MCF 10A (cell line): ENCODE measurements at regions of chr1 and their contacts with region 1.

Region 1: GRCh38 chr1:112706908-112707663 is at the start of gene RHOC:
- DNase-seq: peak; percentile 91
- H3K4me3 Mint-ChIP-seq: peak within 1 kb of the TSS; percentile 78
- H3K27ac Mint-ChIP-seq: peak within 1 kb of the TSS; percentile 91
- H3K4me1 Mint-ChIP-seq: peaks cover 37% of the 10 kb centered on the region
- H3K27me3 Mint-ChIP-seq: no peaks in the 10 kb centered on the region
- CTCF ChIP-seq: peak; percentile 86
- total RNA-seq, gene RHOC: 253 and 294 TPM in 2 replicates

Region 2: DNA sequence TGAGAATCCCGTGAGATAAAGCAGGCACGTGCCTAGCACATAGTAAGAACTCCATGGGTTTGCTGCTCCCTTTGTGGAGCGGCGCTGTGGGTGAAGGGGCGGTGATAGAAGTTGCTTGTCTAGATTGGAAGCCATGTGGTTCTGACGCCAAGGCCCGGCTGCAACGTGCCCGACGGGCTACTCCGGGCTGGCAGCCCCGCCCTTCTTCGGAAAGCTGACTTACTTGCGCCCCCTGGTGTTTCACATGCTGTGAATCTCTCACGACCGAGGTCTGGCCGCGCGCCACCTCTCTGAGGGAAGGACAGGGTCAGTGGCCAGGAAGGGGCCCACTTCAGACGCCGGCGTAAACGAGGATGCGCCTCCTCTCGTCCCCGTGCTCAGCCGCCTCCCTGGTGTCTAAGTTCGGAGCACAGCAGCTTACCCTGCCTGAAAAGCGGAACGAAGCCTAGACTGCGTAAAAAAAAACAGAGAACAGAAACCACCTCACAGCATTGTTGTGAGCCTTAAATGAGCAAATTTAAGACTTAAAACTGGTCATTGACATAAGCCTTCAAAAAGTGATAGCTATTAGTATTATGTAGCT is 240.9 kb before region 1 on chr1:
- CTCF ChIA-PET with region 1: interaction called, 4 read pairs
- POLR2A ChIA-PET with region 1: no interaction called
- intact Hi-C with region 1: loop called (anchors 1 kb)
- DNase-seq: peak; percentile 89
- H3K4me3 Mint-ChIP-seq: peak overlapping the region; percentile 67
- H3K27ac Mint-ChIP-seq: peak overlapping the region; percentile 87
- H3K4me1 Mint-ChIP-seq: peaks cover 15% of the 10 kb centered on the region
- H3K27me3 Mint-ChIP-seq: no peaks in the 10 kb centered on the region
- CTCF ChIP-seq: peak; percentile 76

Region 3: DNA sequence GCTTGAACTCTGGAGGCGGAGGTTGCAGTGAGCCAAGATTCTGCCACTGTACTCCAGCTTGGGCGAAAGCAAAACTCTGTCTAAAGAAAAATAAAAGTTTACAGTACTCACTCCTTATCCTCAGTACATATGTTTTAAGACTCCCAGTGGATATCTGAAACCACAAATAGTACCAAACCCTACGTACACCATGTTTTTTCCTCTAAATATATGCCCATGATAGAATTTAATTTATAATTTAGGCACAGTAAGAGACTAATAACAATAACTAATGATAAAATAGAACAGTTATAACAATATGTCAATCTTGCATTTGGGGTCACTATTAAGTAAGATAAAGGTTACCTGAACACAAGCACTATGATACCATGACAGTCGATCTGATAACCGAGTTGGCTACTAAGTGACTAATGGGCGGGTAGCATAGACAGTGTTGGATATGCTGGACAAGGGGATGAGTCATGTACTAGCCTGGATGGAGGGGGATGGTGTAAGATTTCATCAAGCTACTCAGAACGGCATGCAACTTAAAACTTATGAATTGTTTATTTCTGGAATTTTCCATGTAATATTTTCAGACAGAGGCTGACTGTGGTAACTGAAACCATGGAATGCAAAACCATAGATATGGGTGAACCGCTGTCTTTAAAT is 131.8 kb before region 1 on chr1:
- CTCF ChIA-PET with region 1: no interaction called
- POLR2A ChIA-PET with region 1: no interaction called
- intact Hi-C with region 1: loop called (anchors 1 kb)
- DNase-seq: peak; percentile 88
- H3K4me3 Mint-ChIP-seq: no peak overlapping the region
- H3K27ac Mint-ChIP-seq: peak overlapping the region; percentile 50
- H3K4me1 Mint-ChIP-seq: peaks cover 9% of the 10 kb centered on the region
- H3K27me3 Mint-ChIP-seq: no peaks in the 10 kb centered on the region
- CTCF ChIP-seq: no peak

Region 4: DNA sequence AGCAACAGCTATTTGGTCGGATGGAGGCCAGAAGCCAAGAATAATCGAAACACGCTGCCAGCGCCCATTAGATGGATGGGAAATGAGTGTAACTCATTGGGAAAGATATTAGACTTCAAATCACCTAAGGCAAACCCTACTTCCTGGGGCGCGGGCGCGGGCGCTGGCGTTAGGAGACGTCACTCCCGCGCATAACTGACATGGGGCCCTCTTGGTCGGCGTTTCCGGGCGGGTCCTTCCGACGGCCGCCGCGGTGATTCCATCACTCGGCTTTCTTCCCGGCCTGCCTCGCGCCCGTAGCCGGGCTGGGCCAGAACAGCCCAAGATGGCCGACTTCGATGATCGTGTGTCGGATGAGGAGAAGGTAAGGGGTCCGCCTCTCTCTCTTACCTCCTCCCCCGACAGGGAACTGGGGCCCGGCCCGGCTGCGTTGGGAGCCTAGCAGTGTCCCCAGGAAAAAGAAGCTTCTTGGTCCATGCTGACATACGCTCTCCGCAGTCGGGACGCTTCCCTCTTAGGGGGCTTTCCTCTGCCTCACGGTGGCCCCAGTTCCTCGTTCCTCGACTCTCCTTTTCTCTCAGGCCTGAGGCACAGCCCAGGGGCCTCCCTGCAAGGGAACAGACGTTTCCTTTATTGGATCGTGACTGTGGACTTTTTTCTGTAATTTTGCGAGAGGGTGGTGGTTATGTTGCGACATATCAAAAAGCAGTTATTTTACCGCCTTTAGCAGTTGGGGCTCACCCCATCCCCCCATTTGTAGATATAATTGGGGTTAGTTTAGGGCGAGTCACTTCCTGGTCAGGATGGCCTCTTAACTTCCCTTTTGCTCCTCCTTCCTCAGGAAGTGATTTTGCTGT is 87.3 kb before region 1 on chr1 and contains the start of gene CAPZA1:
- CTCF ChIA-PET with region 1: interaction called, 13 read pairs
- POLR2A ChIA-PET with region 1: interaction called, 40 read pairs
- intact Hi-C with region 1: loop called (anchors 1 kb)
- DNase-seq: peak; percentile 94
- H3K4me3 Mint-ChIP-seq: peak within 1 kb of the TSS; percentile 97
- H3K27ac Mint-ChIP-seq: peak within 1 kb of the TSS; percentile 95
- H3K4me1 Mint-ChIP-seq: peaks cover 12% of the 10 kb centered on the region
- H3K27me3 Mint-ChIP-seq: no peaks in the 10 kb centered on the region
- CTCF ChIP-seq: no peak
- total RNA-seq, gene CAPZA1: 150 and 174 TPM in 2 replicates

Region 5: DNA sequence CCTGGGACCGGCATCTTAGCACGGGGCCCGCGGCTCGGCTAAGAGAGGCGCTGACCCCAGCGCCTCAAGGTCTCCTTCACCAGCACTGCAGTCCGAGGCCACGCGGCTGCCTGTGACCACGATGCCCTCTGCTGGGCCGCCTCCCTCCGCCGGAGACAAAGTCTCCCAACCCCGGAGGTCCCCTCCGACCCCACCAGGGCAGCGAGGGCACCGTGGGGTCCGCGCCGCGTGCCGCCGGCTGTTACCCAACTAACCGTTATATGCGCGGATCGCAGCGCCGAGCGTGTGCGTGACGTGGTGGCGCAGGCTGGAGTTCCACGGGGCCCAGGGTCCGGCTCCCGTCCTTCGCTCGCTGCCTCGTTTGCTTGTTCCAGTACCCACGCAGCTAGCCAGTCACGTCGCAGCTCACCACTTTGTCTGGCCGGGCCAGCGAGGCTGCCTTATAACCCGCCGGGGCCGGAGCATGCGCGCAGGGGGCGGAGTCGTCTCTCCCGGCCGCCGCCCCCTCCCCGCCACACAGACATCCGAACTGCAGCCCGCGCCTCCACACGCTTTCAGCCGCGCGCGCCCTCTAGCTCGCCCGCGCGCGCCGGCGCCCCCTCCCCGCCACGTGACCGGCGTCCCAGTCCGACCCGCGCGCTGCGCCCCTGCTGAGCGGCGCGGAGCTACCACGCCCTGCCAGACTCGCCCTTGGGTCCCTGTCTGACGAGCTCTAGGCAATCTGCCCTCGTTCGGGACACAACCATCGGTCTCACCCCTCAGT is 248.9 kb after region 1 on chr1 and contains the start of gene SLC16A1:
- CTCF ChIA-PET with region 1: no interaction called
- POLR2A ChIA-PET with region 1: no interaction called
- intact Hi-C with region 1: no loop called
- DNase-seq: peak; percentile 93
- H3K4me3 Mint-ChIP-seq: peak within 1 kb of the TSS; percentile 78
- H3K27ac Mint-ChIP-seq: peak within 1 kb of the TSS; percentile 91
- H3K4me1 Mint-ChIP-seq: peaks cover 48% of the 10 kb centered on the region
- H3K27me3 Mint-ChIP-seq: no peaks in the 10 kb centered on the region
- CTCF ChIP-seq: peak; percentile 15
- total RNA-seq, gene SLC16A1: 142 and 148 TPM in 2 replicates